Mammary epithelial cell (primary cell): ENCODE measurements at regions of chr1 and their contacts with region 1.

Region 1: DNA sequence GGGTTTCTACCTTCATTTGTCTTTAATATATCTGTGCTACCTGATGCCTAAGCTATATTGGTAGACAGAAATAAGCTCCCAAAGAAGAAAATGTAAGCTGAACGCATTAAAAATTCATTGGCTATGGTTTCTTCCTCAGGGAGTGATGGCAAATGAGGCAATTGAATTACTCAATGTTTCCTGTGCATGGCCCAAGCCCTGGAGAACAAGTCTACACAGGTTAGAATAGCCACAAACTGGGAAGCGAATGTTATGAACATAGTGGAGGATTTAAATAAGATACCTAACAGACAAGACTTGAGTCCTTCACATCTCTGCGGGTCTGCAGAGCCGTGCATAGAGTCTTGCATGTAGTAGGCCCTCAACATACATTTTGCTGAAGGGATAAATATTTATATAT is 350.3 kb downstream of the RWDD3 start:
- DNase-seq: peak; percentile 84
- H3K4me3 ChIP-seq: no peak overlapping the region
- H3K27ac ChIP-seq: no peak overlapping the region
- H3K4me1 ChIP-seq: peaks cover 20% of the 10 kb centered on the region
- H3K27me3 ChIP-seq: no peaks in the 10 kb centered on the region
- CTCF ChIP-seq: no peak

Region 2: GRCh38 chr1:95503278-95504030 is 80.9 kb before region 1 on chr1:
- CTCF ChIA-PET with region 1: no interaction called
- dilution Hi-C with region 1: no loop called
- in situ Hi-C with region 1: no loop called
- intact Hi-C with region 1: loop called (anchors 10 kb)
- DNase-seq: peak; percentile 71
- H3K4me3 ChIP-seq: no peak overlapping the region
- H3K27ac ChIP-seq: no peak overlapping the region
- H3K4me1 ChIP-seq: peaks cover 24% of the 10 kb centered on the region
- H3K27me3 ChIP-seq: no peaks in the 10 kb centered on the region
- CTCF ChIP-seq: no peak

Region 3: GRCh38 chr1:95547005-95547404 is 37.3 kb before region 1 on chr1:
- CTCF ChIA-PET with region 1: no interaction called
- dilution Hi-C with region 1: no loop called
- in situ Hi-C with region 1: no loop called
- intact Hi-C with region 1: no loop called
- DNase-seq: peak; percentile 75
- H3K4me3 ChIP-seq: no peak overlapping the region
- H3K27ac ChIP-seq: no peak overlapping the region
- H3K4me1 ChIP-seq: peaks cover 15% of the 10 kb centered on the region
- H3K27me3 ChIP-seq: no peaks in the 10 kb centered on the region
- CTCF ChIP-seq: no peak

Region 4: GRCh38 chr1:95622609-95623008 is 38.3 kb after region 1 on chr1:
- CTCF ChIA-PET with region 1: no interaction called
- dilution Hi-C with region 1: no loop called
- in situ Hi-C with region 1: no loop called
- intact Hi-C with region 1: no loop called
- DNase-seq: no peak
- H3K4me3 ChIP-seq: no peak overlapping the region
- H3K27ac ChIP-seq: no peak overlapping the region
- H3K4me1 ChIP-seq: no peaks in the 10 kb centered on the region
- H3K27me3 ChIP-seq: no peaks in the 10 kb centered on the region
- CTCF ChIP-seq: no peak

Region 5: GRCh38 chr1:95770581-95770980 is 186.3 kb after region 1 on chr1:
- CTCF ChIA-PET with region 1: no interaction called
- dilution Hi-C with region 1: no loop called
- in situ Hi-C with region 1: no loop called
- intact Hi-C with region 1: no loop called
- DNase-seq: no peak
- H3K4me3 ChIP-seq: no peak overlapping the region
- H3K27ac ChIP-seq: no peak overlapping the region
- H3K4me1 ChIP-seq: no peaks in the 10 kb centered on the region
- H3K27me3 ChIP-seq: no peaks in the 10 kb centered on the region
- CTCF ChIP-seq: no peak